Naive thymus-derived CD4-positive, alpha-beta T cell (primary cell): ENCODE measurements at regions of chr21 and their contacts with region 1.

Region 1: GRCh38 chr21:41816220-41817165 is 49.6 kb upstream of the RIPK4 start:
- DNase-seq: peak; percentile 19 to 62 (median 47)
- ATAC-seq: peak; percentile 81
- H3K4me3 ChIP-seq: no peak overlapping the region
- H3K4me3 Mint-ChIP-seq: no peak overlapping the region
- H3K27ac ChIP-seq: no peak overlapping the region
- H3K27ac Mint-ChIP-seq: peak overlapping the region in 7 of 9 donors; percentile 1 to 76 (median 35)
- H3K4me1 ChIP-seq: no peaks in the 10 kb centered on the region
- H3K4me1 Mint-ChIP-seq: peaks cover 0 to 11% (median 10%) of the 10 kb centered on the region in 7 donors
- H3K27me3 ChIP-seq: no peaks in the 10 kb centered on the region
- H3K27me3 Mint-ChIP-seq: no peaks in the 10 kb centered on the region

Region 2: GRCh38 chr21:41612674-41613532 is 203.6 kb before region 1 on chr21:
- CTCF ChIA-PET with region 1: no interaction called
- POLR2A ChIA-PET with region 1: no interaction called
- intact Hi-C with region 1: loop called in 1 of 2 experiments (anchors 2 kb)
- DNase-seq: no peak
- ATAC-seq: peak; percentile 42
- H3K4me3 ChIP-seq: no peak overlapping the region
- H3K4me3 Mint-ChIP-seq: peak overlapping the region in 1 of 10 donors; percentile 24
- H3K27ac ChIP-seq: no peak overlapping the region
- H3K27ac Mint-ChIP-seq: no peak overlapping the region
- H3K4me1 ChIP-seq: no peaks in the 10 kb centered on the region
- H3K4me1 Mint-ChIP-seq: no peaks in the 10 kb centered on the region
- H3K27me3 ChIP-seq: peaks cover 0 to 4% of the 10 kb centered on the region in 2 donors
- H3K27me3 Mint-ChIP-seq: peaks cover 20 to 62% (median 38%) of the 10 kb centered on the region in 5 donors

Region 3: GRCh38 chr21:41768437-41769061 is 47.9 kb before region 1 on chr21:
- CTCF ChIA-PET with region 1: no interaction called
- POLR2A ChIA-PET with region 1: no interaction called
- intact Hi-C with region 1: no loop called
- DNase-seq: peak in 6 of 9 donors; percentile 15 to 47 (median 34)
- ATAC-seq: no peak
- H3K4me3 ChIP-seq: peak overlapping the region; percentile 64
- H3K4me3 Mint-ChIP-seq: peak overlapping the region; percentile 85 to 97 (median 87)
- H3K27ac ChIP-seq: no peak overlapping the region
- H3K27ac Mint-ChIP-seq: peak overlapping the region in 5 of 9 donors; percentile 7 to 57 (median 19)
- H3K4me1 ChIP-seq: peaks cover 11 to 31% of the 10 kb centered on the region in 2 donors
- H3K4me1 Mint-ChIP-seq: peaks cover 23 to 30% (median 24%) of the 10 kb centered on the region in 7 donors
- H3K27me3 ChIP-seq: peaks cover 8 to 19% of the 10 kb centered on the region in 2 donors
- H3K27me3 Mint-ChIP-seq: peaks cover 59 to 83% (median 64%) of the 10 kb centered on the region in 5 donors

Region 4: GRCh38 chr21:41832596-41833496 is 16.4 kb after region 1 on chr21:
- CTCF ChIA-PET with region 1: no interaction called
- POLR2A ChIA-PET with region 1: no interaction called
- intact Hi-C with region 1: no loop called
- DNase-seq: no peak
- ATAC-seq: no peak
- H3K4me3 ChIP-seq: no peak overlapping the region
- H3K4me3 Mint-ChIP-seq: no peak overlapping the region
- H3K27ac ChIP-seq: no peak overlapping the region
- H3K27ac Mint-ChIP-seq: no peak overlapping the region
- H3K4me1 ChIP-seq: no peaks in the 10 kb centered on the region
- H3K4me1 Mint-ChIP-seq: no peaks in the 10 kb centered on the region
- H3K27me3 ChIP-seq: no peaks in the 10 kb centered on the region
- H3K27me3 Mint-ChIP-seq: no peaks in the 10 kb centered on the region

Region 5: GRCh38 chr21:41895643-41896493 is 79.4 kb after region 1 on chr21:
- CTCF ChIA-PET with region 1: no interaction called
- POLR2A ChIA-PET with region 1: no interaction called
- intact Hi-C with region 1: loop called in 1 of 2 experiments (anchors 2 kb)
- DNase-seq: peak in 8 of 9 donors; percentile 18 to 72 (median 58)
- ATAC-seq: peak; percentile 94
- H3K4me3 ChIP-seq: no peak overlapping the region
- H3K4me3 Mint-ChIP-seq: peak overlapping the region in 8 of 10 donors; percentile 35 to 70 (median 51)
- H3K27ac ChIP-seq: no peak overlapping the region
- H3K27ac Mint-ChIP-seq: peak overlapping the region; percentile 34 to 91 (median 71)
- H3K4me1 ChIP-seq: peaks cover 4 to 16% of the 10 kb centered on the region in 2 donors
- H3K4me1 Mint-ChIP-seq: peaks cover 9 to 35% (median 21%) of the 10 kb centered on the region in 7 donors
- H3K27me3 ChIP-seq: no peaks in the 10 kb centered on the region
- H3K27me3 Mint-ChIP-seq: no peaks in the 10 kb centered on the region

Region 6: GRCh38 chr21:42107881-42108553 is 291.5 kb after region 1 on chr21:
- CTCF ChIA-PET with region 1: interaction called, 58 read pairs
- POLR2A ChIA-PET with region 1: interaction called, 4 read pairs
- intact Hi-C with region 1: loop called (anchors 2 kb)
- DNase-seq: peak; percentile 46 to 82 (median 69)
- ATAC-seq: peak; percentile 97
- H3K4me3 ChIP-seq: peak overlapping the region; percentile 11
- H3K4me3 Mint-ChIP-seq: peak overlapping the region; percentile 34 to 84 (median 76)
- H3K27ac ChIP-seq: peak overlapping the region; percentile 38
- H3K27ac Mint-ChIP-seq: peak overlapping the region in 8 of 9 donors; percentile 11 to 82 (median 73)
- H3K4me1 ChIP-seq: peaks cover 0 to 15% of the 10 kb centered on the region in 2 donors
- H3K4me1 Mint-ChIP-seq: peaks cover 0 to 28% (median 10%) of the 10 kb centered on the region in 7 donors
- H3K27me3 ChIP-seq: no peaks in the 10 kb centered on the region
- H3K27me3 Mint-ChIP-seq: peaks cover 0 to 4% (median 0%) of the 10 kb centered on the region in 5 donors

Region 7: DNA sequence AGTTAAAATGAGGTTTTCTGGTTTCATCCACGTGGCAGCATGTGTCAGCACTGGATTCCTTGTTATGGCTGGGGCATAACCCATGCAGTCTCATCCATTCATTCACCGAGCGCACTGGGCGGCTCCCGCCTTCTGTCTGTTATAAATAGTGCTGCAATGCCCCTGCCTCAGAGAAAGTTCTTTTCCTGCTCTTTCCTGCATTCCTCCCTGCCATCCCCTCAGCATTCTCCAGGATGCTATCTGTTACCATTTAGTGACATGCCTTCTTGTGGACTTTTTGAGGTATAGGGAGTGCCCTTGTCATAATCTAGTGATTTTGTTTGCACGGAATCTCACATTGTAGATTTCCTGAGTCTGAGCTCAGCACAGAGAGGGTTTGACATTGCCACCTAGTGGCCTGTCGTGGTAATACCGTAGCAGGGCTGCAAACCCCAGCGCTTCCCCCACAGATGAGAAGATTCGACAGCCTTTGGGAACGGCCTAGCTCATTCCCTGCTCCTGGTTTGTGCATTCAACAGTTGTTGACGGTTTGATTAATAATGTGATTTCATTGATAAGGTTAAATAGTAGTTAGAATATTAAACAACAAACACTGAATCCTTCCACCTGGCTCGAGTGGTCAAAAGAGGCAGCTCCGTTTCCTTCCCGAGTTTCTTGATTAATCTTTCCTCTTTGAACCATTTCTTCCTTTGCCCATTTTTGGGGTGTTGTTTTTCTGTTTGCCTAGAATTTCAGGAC is 300.9 kb after region 1 on chr21:
- CTCF ChIA-PET with region 1: interaction called, 58 read pairs
- POLR2A ChIA-PET with region 1: no interaction called
- intact Hi-C with region 1: loop called (anchors 1 kb)
- DNase-seq: peak; percentile 48 to 82 (median 70)
- ATAC-seq: peak; percentile 91
- H3K4me3 ChIP-seq: no peak overlapping the region
- H3K4me3 Mint-ChIP-seq: peak overlapping the region in 7 of 10 donors; percentile 31 to 82 (median 57)
- H3K27ac ChIP-seq: no peak overlapping the region
- H3K27ac Mint-ChIP-seq: peak overlapping the region in 3 of 9 donors; percentile 6 to 65 (median 52)
- H3K4me1 ChIP-seq: peaks cover 0 to 5% of the 10 kb centered on the region in 2 donors
- H3K4me1 Mint-ChIP-seq: peaks cover 18 to 33% (median 25%) of the 10 kb centered on the region in 7 donors
- H3K27me3 ChIP-seq: peaks cover 0 to 5% of the 10 kb centered on the region in 2 donors
- H3K27me3 Mint-ChIP-seq: peaks cover 44 to 68% (median 53%) of the 10 kb centered on the region in 5 donors